ENCODE measurements at regions of chr12 and their contacts with region 1.

Region 1: DNA sequence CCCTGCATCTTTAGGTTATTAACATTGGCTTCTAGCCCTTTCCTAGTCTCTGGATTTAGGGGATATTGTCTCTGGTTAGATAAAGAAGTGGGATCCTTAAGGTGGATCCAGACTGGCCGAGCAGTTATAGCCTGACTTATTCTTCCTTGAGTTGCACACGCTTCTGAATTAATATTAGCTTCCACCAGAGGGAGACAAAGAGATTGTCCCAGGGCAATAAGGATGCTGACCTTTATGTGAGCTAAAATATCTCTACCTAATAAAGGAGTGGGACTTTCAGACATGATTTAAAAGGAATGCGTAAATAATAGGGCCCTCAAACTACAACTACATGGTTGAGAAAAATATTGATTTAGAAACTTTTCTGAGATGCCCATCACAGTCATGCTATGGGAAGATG is 139.7 kb downstream of the SLCO1B3 start:
- DNase-seq: peak; percentile 59
- H3K4me3 ChIP-seq: no peak overlapping the region
- H3K27ac ChIP-seq: no peak overlapping the region
- H3K4me1 ChIP-seq: no peaks in the 10 kb centered on the region
- H3K27me3 ChIP-seq: no peaks in the 10 kb centered on the region
- CTCF ChIP-seq: peak; percentile 67

Region 2: GRCh38 chr12:20711846-20712245 is 238.4 kb before region 1 on chr12:
- CTCF ChIA-PET with region 1: no interaction called
- POLR2A ChIA-PET with region 1: no interaction called
- intact Hi-C with region 1: no loop called
- DNase-seq: no peak
- H3K4me3 ChIP-seq: no peak overlapping the region
- H3K27ac ChIP-seq: no peak overlapping the region
- H3K4me1 ChIP-seq: no peaks in the 10 kb centered on the region
- H3K27me3 ChIP-seq: no peaks in the 10 kb centered on the region
- CTCF ChIP-seq: no peak

Region 3: GRCh38 chr12:21169878-21170472 is 219.7 kb after region 1 on chr12:
- CTCF ChIA-PET with region 1: no interaction called
- POLR2A ChIA-PET with region 1: no interaction called
- intact Hi-C with region 1: loop called (anchors 1 kb)
- DNase-seq: peak; percentile 72
- H3K4me3 ChIP-seq: no peak overlapping the region
- H3K27ac ChIP-seq: no peak overlapping the region
- H3K4me1 ChIP-seq: no peaks in the 10 kb centered on the region
- H3K27me3 ChIP-seq: peaks cover 14% of the 10 kb centered on the region
- CTCF ChIP-seq: peak; percentile 88

Measured in A673 (cell line).